CD4-positive, alpha-beta memory T cell (primary cell): ENCODE measurements at regions of chr16 and their contacts with region 1.

Region 1: GRCh38 chr16:50665128-50665878 is 15.8 kb downstream of the SNX20 start:
- DNase-seq: peak; percentile 76 to 84 (median 79)
- H3K4me3 ChIP-seq: peak overlapping the region; percentile 37 to 61
- H3K4me3 Mint-ChIP-seq: peak overlapping the region; percentile 75 to 86 (median 82)
- H3K27ac ChIP-seq: peak overlapping the region; percentile 41
- H3K27ac Mint-ChIP-seq: peak overlapping the region; percentile 73 to 95 (median 90)
- H3K4me1 ChIP-seq: peaks cover 40% of the 10 kb centered on the region
- H3K4me1 Mint-ChIP-seq: peaks cover 21 to 43% (median 32%) of the 10 kb centered on the region in 4 donors
- H3K27me3 ChIP-seq: no peaks in the 10 kb centered on the region
- H3K27me3 Mint-ChIP-seq: no peaks in the 10 kb centered on the region

Region 2: GRCh38 chr16:50266337-50267091 is 398.8 kb before region 1 on chr16 and contains the start of gene ADCY7:
- CTCF ChIA-PET with region 1: interaction called, 10 read pairs
- POLR2A ChIA-PET with region 1: interaction called, 3 read pairs
- intact Hi-C with region 1: loop called (anchors 5 kb)
- DNase-seq: peak; percentile 77 to 92 (median 80)
- H3K4me3 ChIP-seq: peak within 1 kb of the TSS; percentile 75 to 76
- H3K4me3 Mint-ChIP-seq: peak within 1 kb of the TSS; percentile 93 to 99 (median 98)
- H3K27ac ChIP-seq: peak within 1 kb of the TSS; percentile 81
- H3K27ac Mint-ChIP-seq: peak within 1 kb of the TSS; percentile 95 to 99 (median 98)
- H3K4me1 ChIP-seq: peaks cover 60% of the 10 kb centered on the region
- H3K4me1 Mint-ChIP-seq: peaks cover 40 to 84% (median 56%) of the 10 kb centered on the region in 4 donors
- H3K27me3 ChIP-seq: no peaks in the 10 kb centered on the region
- H3K27me3 Mint-ChIP-seq: no peaks in the 10 kb centered on the region
- total RNA-seq, gene ADCY7: 230 to 235 TPM

Region 3: GRCh38 chr16:50368410-50369132 is 296.7 kb before region 1 on chr16 and contains the start of gene BRD7:
- CTCF ChIA-PET with region 1: interaction called, 16 read pairs
- POLR2A ChIA-PET with region 1: interaction called, 14 read pairs
- intact Hi-C with region 1: loop called (anchors 2 kb)
- DNase-seq: peak; percentile 58 to 77 (median 66)
- H3K4me3 ChIP-seq: peak within 1 kb of the TSS; percentile 57 to 59
- H3K4me3 Mint-ChIP-seq: peak within 1 kb of the TSS; percentile 89 to 96 (median 92)
- H3K27ac ChIP-seq: peak within 1 kb of the TSS; percentile 70
- H3K27ac Mint-ChIP-seq: peak within 1 kb of the TSS; percentile 83 to 99 (median 96)
- H3K4me1 ChIP-seq: peaks cover 53% of the 10 kb centered on the region
- H3K4me1 Mint-ChIP-seq: peaks cover 38 to 58% (median 46%) of the 10 kb centered on the region in 4 donors
- H3K27me3 ChIP-seq: no peaks in the 10 kb centered on the region
- H3K27me3 Mint-ChIP-seq: peaks cover 0 to 1% of the 10 kb centered on the region in 2 donors
- total RNA-seq, gene BRD7: 86.6 to 97.7 TPM

Region 4: GRCh38 chr16:50681021-50681885 is 15.9 kb after region 1 on chr16 and contains the start of gene SNX20:
- CTCF ChIA-PET with region 1: interaction called, 289 read pairs
- POLR2A ChIA-PET with region 1: interaction called, 238 read pairs
- intact Hi-C with region 1: loop called (anchors 2 kb)
- DNase-seq: peak; percentile 69 to 82 (median 76)
- H3K4me3 ChIP-seq: peak within 1 kb of the TSS; percentile 45 to 93
- H3K4me3 Mint-ChIP-seq: peak within 1 kb of the TSS; percentile 83 to 97 (median 94)
- H3K27ac ChIP-seq: peak within 1 kb of the TSS; percentile 90
- H3K27ac Mint-ChIP-seq: peak within 1 kb of the TSS; percentile 87 to 99 (median 97)
- H3K4me1 ChIP-seq: peaks cover 93% of the 10 kb centered on the region
- H3K4me1 Mint-ChIP-seq: peaks cover 69 to 95% (median 84%) of the 10 kb centered on the region in 4 donors
- H3K27me3 ChIP-seq: no peaks in the 10 kb centered on the region
- H3K27me3 Mint-ChIP-seq: no peaks in the 10 kb centered on the region
- total RNA-seq, gene SNX20: 88.9 to 90.1 TPM

Region 5: DNA sequence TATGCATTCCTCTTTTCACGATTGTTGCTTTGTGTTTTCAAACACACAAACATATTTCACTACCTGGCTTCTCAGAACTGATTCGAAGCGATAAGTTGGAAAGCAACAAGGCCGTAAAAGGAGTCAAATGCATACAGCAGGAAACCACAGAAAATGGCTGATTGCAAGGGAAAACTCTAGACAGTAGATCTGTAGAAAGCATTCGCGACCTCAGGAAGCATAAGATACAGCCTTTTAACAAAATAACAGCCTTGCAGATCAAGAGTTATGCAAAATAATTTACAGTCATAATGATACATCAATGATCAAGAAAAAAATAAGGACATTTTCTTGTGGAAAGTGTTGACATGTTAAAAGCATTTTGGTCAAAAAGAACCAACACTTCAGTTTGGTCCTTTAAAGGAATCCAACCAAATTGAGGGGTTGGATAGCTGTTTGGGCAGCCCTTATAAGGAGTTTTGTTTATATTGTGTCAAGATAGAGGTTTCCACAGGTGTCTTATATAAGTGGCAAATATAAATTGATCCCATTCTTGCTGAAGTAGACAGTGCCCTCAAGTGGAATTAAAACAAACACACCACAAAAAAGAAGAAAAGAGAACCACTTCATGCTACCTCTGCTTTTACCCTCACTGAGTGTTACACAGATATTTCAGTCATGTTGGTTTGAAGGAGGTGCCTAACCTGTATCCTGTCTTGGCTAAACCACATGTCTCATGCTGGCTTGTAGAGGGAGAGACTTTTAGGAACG is 82.1 kb after region 1 on chr16:
- CTCF ChIA-PET with region 1: interaction called, 242 read pairs
- POLR2A ChIA-PET with region 1: interaction called, 478 read pairs
- intact Hi-C with region 1: loop called (anchors 1 kb)
- DNase-seq: peak; percentile 64 to 75 (median 70)
- H3K4me3 ChIP-seq: peak overlapping the region; percentile 26 to 48
- H3K4me3 Mint-ChIP-seq: peak overlapping the region; percentile 83 to 96 (median 90)
- H3K27ac ChIP-seq: peak overlapping the region; percentile 59
- H3K27ac Mint-ChIP-seq: peak overlapping the region; percentile 95 to 99 (median 97)
- H3K4me1 ChIP-seq: peaks cover 77% of the 10 kb centered on the region
- H3K4me1 Mint-ChIP-seq: peaks cover 37 to 83% (median 55%) of the 10 kb centered on the region in 4 donors
- H3K27me3 ChIP-seq: no peaks in the 10 kb centered on the region
- H3K27me3 Mint-ChIP-seq: no peaks in the 10 kb centered on the region